Activated T-helper 1 cell treated with anti-CD3 and anti-CD28 coated beads, Interleukin-12 subunit alpha, Interleukin-12 subunit beta, Interleukin-2, Interleukin-4 antibody, amounts not matched to agents 30 ng/mL and 10 ng/mL and 1 ng/mL, durations not matched to agents 14 hours and 24 hours and 36 hours (primary cell): ENCODE measurements at regions of chr3 and their contacts with region 1.

Region 1: DNA sequence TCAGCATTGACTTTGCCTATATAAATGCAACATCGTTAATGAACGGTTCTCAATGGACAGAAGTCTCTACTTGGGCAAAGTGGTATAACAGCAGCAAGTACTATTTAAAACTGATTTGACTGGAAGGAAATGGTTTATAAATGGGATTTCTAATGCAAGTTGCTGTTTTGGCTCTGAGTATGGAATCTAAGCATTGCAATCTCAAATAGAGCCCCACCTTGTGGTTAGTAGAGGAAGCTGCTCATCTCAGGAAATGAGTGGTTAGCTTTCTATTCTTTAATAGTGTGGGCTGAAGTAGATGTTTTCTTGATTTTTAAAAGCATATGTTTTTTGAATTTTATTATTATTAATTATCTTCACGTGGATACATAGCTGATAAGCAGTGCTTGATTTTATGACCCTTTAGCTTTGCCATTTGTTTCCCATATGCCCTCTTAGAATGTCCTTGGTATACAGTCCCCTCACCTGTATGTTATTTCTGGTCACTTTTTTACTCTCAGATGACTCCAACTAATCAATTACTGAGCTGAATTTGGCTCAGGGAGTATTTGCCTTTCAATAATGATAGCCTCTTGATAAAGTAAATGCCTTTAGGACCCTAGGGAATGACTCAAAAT is 67.1 kb downstream of the OXSM start:
- DNase-seq: no peak
- H3K4me3 Mint-ChIP-seq: no peak overlapping the region
- H3K27ac Mint-ChIP-seq: no peak overlapping the region
- H3K4me1 Mint-ChIP-seq: peaks cover 5% of the 10 kb centered on the region
- H3K27me3 Mint-ChIP-seq: peaks cover 2% of the 10 kb centered on the region

Region 2: DNA sequence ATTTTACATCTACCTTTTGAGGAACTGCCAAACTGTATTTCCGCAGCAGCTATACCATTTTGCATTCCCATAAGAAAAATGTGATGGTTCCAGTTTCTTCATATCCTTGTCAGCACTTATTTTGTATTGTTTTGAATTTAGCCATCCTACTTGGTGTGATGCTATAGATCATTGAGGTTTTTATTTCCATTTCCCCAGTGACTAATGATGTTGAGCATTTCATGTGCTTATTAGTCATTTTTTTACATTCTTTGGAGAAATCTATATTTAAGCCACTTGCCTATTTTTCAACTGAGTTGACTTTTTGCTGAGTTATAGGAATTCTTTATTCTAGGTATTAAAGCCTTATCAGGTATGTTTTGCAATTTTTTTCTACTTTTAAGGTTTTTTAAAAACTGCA is 776.5 kb before region 1 on chr3:
- intact Hi-C with region 1: no loop called
- DNase-seq: no peak
- H3K4me3 Mint-ChIP-seq: no peak overlapping the region
- H3K27ac Mint-ChIP-seq: no peak overlapping the region
- H3K4me1 Mint-ChIP-seq: no peaks in the 10 kb centered on the region
- H3K27me3 Mint-ChIP-seq: no peaks in the 10 kb centered on the region

Region 3: GRCh38 chr3:25782938-25783660 is 73.9 kb before region 1 on chr3 and contains the start of gene NGLY1:
- intact Hi-C with region 1: loop called (anchors 2 kb)
- DNase-seq: peak; percentile 84
- H3K4me3 Mint-ChIP-seq: peak within 1 kb of the TSS; percentile 86
- H3K27ac Mint-ChIP-seq: peak within 1 kb of the TSS; percentile 82
- H3K4me1 Mint-ChIP-seq: peaks cover 59% of the 10 kb centered on the region
- H3K27me3 Mint-ChIP-seq: no peaks in the 10 kb centered on the region
- total RNA-seq, gene NGLY1: 57.9 and 59.2 TPM in 2 replicates

Region 4: GRCh38 chr3:25904206-25904605 is 47.2 kb after region 1 on chr3:
- intact Hi-C with region 1: no loop called
- DNase-seq: no peak
- H3K4me3 Mint-ChIP-seq: no peak overlapping the region
- H3K27ac Mint-ChIP-seq: no peak overlapping the region
- H3K4me1 Mint-ChIP-seq: peaks cover 4% of the 10 kb centered on the region
- H3K27me3 Mint-ChIP-seq: no peaks in the 10 kb centered on the region